ENCODE measurements at regions of chr15 and their contacts with region 1.

Region 1: DNA sequence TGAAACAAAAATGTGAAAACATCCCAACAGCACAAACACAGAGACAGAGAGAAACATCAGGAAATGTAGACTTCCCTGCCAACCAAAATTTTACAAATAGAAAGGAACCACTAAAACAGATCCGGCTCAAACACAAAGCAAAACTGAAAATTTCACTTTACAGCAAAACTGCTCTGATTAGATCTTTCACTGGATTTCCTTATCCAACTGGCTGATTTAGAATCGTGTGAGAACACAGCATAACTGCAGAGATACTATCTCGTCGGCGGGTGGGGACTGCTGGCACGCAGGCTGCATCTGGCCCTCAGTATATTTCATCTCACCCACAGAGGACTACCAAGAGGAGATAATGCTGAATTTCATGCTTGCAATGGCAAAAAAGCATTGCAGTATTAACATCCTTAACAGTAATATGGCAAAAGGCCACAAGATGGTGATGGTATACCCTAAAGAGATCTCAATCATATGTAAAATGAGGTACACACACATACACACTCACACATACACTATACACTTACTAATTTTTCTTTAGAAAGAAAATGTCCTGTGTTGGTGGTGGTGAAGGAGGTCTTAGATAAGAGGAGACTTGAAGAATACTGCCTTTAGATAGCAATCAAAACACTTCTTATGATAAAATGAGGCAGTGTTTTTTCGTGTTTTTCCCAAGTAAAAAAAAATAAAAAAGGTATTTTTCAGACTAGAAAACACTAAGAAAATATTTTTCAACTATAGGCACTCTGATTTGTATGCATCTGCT is 10.6 kb upstream of the LEO1 start:
- DNase-seq: peak in 8 of 9 donors; percentile 45 to 78 (median 60)
- ATAC-seq: peak; percentile 97
- H3K4me3 ChIP-seq: peak overlapping the region; percentile 2
- H3K4me3 Mint-ChIP-seq: peak overlapping the region; percentile 51 to 89 (median 79)
- H3K27ac ChIP-seq: peak overlapping the region; percentile 38
- H3K27ac Mint-ChIP-seq: peak overlapping the region; percentile 68 to 93 (median 82)
- H3K4me1 ChIP-seq: peaks cover 0 to 10% of the 10 kb centered on the region in 2 donors
- H3K4me1 Mint-ChIP-seq: peaks cover 10 to 15% (median 12%) of the 10 kb centered on the region in 7 donors
- H3K27me3 ChIP-seq: no peaks in the 10 kb centered on the region
- H3K27me3 Mint-ChIP-seq: peaks cover 0 to 4% (median 0%) of the 10 kb centered on the region in 5 donors

Region 2: DNA sequence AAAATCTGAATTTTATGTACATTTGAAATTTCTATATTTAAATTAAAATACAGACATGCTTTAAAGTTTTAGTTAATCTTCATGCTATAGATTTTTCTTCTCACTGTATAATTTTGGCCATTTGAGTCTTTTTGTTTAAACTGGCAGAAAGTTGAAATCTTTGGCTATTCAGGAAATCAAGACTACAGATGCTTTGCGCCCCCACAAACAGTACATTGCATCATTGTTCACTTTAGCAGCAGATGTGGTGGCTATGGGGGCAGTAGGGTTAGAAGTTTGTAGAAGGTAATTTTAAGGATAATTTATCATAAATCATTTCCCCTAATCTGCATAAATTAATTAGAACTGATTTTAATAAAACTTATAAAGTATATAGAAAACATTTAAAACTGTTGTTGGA is 1237.6 kb before region 1 on chr15:
- CTCF ChIA-PET with region 1: no interaction called
- POLR2A ChIA-PET with region 1: no interaction called
- intact Hi-C with region 1: no loop called
- DNase-seq: no peak
- ATAC-seq: no peak
- H3K4me3 ChIP-seq: no peak overlapping the region
- H3K4me3 Mint-ChIP-seq: no peak overlapping the region
- H3K27ac ChIP-seq: no peak overlapping the region
- H3K27ac Mint-ChIP-seq: no peak overlapping the region
- H3K4me1 ChIP-seq: no peaks in the 10 kb centered on the region
- H3K4me1 Mint-ChIP-seq: no peaks in the 10 kb centered on the region
- H3K27me3 ChIP-seq: no peaks in the 10 kb centered on the region
- H3K27me3 Mint-ChIP-seq: no peaks in the 10 kb centered on the region

Region 3: GRCh38 chr15:52005748-52006701 is 23.8 kb after region 1 on chr15:
- CTCF ChIA-PET with region 1: no interaction called
- POLR2A ChIA-PET with region 1: no interaction called
- intact Hi-C with region 1: loop called in 1 of 2 experiments (anchors 1 kb)
- DNase-seq: no peak
- ATAC-seq: no peak
- H3K4me3 ChIP-seq: no peak overlapping the region
- H3K4me3 Mint-ChIP-seq: peak overlapping the region in 1 of 10 donors; percentile 54
- H3K27ac ChIP-seq: no peak overlapping the region
- H3K27ac Mint-ChIP-seq: peak overlapping the region in 1 of 9 donors; percentile 82
- H3K4me1 ChIP-seq: peaks cover 0 to 9% of the 10 kb centered on the region in 2 donors
- H3K4me1 Mint-ChIP-seq: peaks cover 9 to 58% (median 16%) of the 10 kb centered on the region in 7 donors
- H3K27me3 ChIP-seq: no peaks in the 10 kb centered on the region
- H3K27me3 Mint-ChIP-seq: peaks cover 0 to 2% (median 0%) of the 10 kb centered on the region in 5 donors

Region 4: GRCh38 chr15:52050416-52050815 is 68.2 kb after region 1 on chr15:
- CTCF ChIA-PET with region 1: no interaction called
- POLR2A ChIA-PET with region 1: no interaction called
- intact Hi-C with region 1: loop called (anchors 1 kb)
- DNase-seq: no peak
- ATAC-seq: no peak
- H3K4me3 ChIP-seq: no peak overlapping the region
- H3K4me3 Mint-ChIP-seq: no peak overlapping the region
- H3K27ac ChIP-seq: no peak overlapping the region
- H3K27ac Mint-ChIP-seq: no peak overlapping the region
- H3K4me1 ChIP-seq: peaks cover 7 to 12% of the 10 kb centered on the region in 2 donors
- H3K4me1 Mint-ChIP-seq: peaks cover 17 to 29% (median 22%) of the 10 kb centered on the region in 7 donors
- H3K27me3 ChIP-seq: no peaks in the 10 kb centered on the region
- H3K27me3 Mint-ChIP-seq: no peaks in the 10 kb centered on the region

Region 5: DNA sequence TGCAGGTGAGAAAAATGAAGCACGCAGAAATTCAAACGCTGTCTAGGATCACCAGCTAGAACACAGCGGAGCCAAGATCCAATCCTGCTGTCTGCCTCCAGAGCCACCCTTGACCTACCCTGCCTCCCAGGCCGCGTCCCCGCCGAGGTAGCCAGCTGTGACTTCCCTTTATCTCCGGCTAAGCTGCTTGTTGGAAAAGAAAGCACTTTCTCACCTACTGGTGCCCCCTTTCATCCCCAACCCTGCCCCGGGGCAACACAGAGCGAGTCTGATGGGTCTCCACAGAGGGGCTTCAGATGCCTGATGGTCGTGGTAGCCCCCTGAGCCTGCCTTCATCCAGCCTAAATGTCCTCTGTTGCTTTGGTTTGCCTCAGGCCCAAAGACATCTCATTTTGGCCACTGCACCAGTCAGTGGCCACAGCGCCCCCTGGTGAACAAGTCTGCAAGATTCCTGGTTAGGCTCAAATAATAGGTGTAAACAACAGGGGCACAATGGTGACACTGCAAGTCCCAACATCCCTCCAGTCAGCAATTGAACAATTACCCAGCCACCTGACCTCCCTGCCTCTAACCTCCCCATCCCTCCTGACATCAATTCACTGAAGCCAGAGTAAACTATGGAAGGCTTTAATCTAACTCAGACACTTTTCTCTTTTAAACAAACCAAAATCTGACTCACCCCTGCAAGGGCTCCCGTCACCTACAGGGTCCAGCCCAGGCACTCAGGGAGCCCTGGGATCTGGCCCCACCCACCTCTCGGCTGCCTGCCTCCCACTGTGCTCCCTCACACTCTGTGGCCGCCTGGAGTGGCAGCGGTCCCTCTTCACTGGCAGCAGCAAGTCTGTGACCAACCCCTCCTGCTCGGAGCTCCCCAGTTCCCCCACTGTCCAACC is 157.7 kb after region 1 on chr15:
- CTCF ChIA-PET with region 1: interaction called, 4 read pairs
- POLR2A ChIA-PET with region 1: interaction called, 6 read pairs
- intact Hi-C with region 1: loop called (anchors 1 kb)
- DNase-seq: peak; percentile 17 to 70 (median 49)
- ATAC-seq: peak; percentile 71
- H3K4me3 ChIP-seq: no peak overlapping the region
- H3K4me3 Mint-ChIP-seq: no peak overlapping the region
- H3K27ac ChIP-seq: no peak overlapping the region
- H3K27ac Mint-ChIP-seq: peak overlapping the region in 3 of 9 donors; percentile 20 to 65 (median 63)
- H3K4me1 ChIP-seq: peaks cover 13 to 14% of the 10 kb centered on the region in 2 donors
- H3K4me1 Mint-ChIP-seq: peaks cover 8 to 29% (median 22%) of the 10 kb centered on the region in 7 donors
- H3K27me3 ChIP-seq: no peaks in the 10 kb centered on the region
- H3K27me3 Mint-ChIP-seq: no peaks in the 10 kb centered on the region

Region 6: DNA sequence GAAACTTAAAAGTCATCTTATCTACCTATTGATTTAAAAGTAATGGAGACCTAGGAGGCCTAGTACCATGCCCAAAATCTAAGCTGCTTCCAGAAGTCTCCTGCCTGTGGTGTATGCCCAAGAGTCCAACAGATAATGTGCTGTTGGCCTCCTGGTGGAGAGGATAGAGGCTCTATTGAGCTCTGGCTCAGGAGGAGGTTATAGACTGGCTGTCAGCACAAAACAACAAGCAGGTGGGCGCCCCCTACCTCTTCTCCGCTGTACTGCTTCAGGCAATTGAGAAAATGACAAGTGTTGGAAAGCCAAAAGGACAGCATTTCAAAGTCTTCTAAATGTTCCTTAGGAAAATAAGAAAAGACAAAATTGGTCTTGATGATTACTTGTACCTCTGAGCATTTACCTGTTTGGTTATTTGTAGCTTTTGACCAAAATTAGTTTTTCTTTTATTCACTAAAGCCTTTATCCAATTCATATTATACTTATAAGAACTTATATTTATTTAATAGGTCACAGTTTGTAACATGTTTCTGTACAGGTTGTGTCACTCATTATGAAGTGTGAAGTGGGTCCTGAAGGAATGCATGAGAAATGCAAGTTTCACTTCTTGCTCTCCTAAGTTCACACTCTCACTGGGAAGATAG is 226.2 kb after region 1 on chr15:
- CTCF ChIA-PET with region 1: interaction called, 4 read pairs
- POLR2A ChIA-PET with region 1: no interaction called
- intact Hi-C with region 1: loop called (anchors 1 kb)
- DNase-seq: peak; percentile 45 to 77 (median 70)
- ATAC-seq: peak; percentile 95
- H3K4me3 ChIP-seq: no peak overlapping the region
- H3K4me3 Mint-ChIP-seq: no peak overlapping the region
- H3K27ac ChIP-seq: no peak overlapping the region
- H3K27ac Mint-ChIP-seq: peak overlapping the region in 4 of 9 donors; percentile 4 to 77 (median 69)
- H3K4me1 ChIP-seq: no peaks in the 10 kb centered on the region
- H3K4me1 Mint-ChIP-seq: peaks cover 0 to 6% (median 0%) of the 10 kb centered on the region in 7 donors
- H3K27me3 ChIP-seq: no peaks in the 10 kb centered on the region
- H3K27me3 Mint-ChIP-seq: no peaks in the 10 kb centered on the region

Region 7: GRCh38 chr15:52609593-52609992 is 627.4 kb after region 1 on chr15:
- CTCF ChIA-PET with region 1: no interaction called
- POLR2A ChIA-PET with region 1: no interaction called
- intact Hi-C with region 1: no loop called
- DNase-seq: no peak
- ATAC-seq: no peak
- H3K4me3 ChIP-seq: no peak overlapping the region
- H3K4me3 Mint-ChIP-seq: no peak overlapping the region
- H3K27ac ChIP-seq: no peak overlapping the region
- H3K27ac Mint-ChIP-seq: no peak overlapping the region
- H3K4me1 ChIP-seq: no peaks in the 10 kb centered on the region
- H3K4me1 Mint-ChIP-seq: no peaks in the 10 kb centered on the region
- H3K27me3 ChIP-seq: no peaks in the 10 kb centered on the region
- H3K27me3 Mint-ChIP-seq: no peaks in the 10 kb centered on the region